ENCODE measurements at regions of chr2 and their contacts with region 1.

Region 1: GRCh38 chr2:65056215-65057053 is at the start of gene CEP68:
- DNase-seq: peak; percentile 93 to 97 (median 95)
- H3K4me3 ChIP-seq: peak within 1 kb of the TSS; percentile 65
- H3K4me3 Mint-ChIP-seq: peak within 1 kb of the TSS; percentile 85 to 98 (median 97)
- H3K27ac ChIP-seq: peak within 1 kb of the TSS; percentile 55
- H3K27ac Mint-ChIP-seq: peak within 1 kb of the TSS; percentile 71 to 96 (median 94)
- H3K4me1 ChIP-seq: peaks cover 61% of the 10 kb centered on the region
- H3K4me1 Mint-ChIP-seq: peaks cover 53 to 76% (median 72%) of the 10 kb centered on the region in 3 donors
- H3K27me3 ChIP-seq: no peaks in the 10 kb centered on the region
- H3K27me3 Mint-ChIP-seq: peaks cover 0 to 1% of the 10 kb centered on the region in 2 donors
- total RNA-seq, gene CEP68: 7.2 to 7.4 TPM

Region 2: DNA sequence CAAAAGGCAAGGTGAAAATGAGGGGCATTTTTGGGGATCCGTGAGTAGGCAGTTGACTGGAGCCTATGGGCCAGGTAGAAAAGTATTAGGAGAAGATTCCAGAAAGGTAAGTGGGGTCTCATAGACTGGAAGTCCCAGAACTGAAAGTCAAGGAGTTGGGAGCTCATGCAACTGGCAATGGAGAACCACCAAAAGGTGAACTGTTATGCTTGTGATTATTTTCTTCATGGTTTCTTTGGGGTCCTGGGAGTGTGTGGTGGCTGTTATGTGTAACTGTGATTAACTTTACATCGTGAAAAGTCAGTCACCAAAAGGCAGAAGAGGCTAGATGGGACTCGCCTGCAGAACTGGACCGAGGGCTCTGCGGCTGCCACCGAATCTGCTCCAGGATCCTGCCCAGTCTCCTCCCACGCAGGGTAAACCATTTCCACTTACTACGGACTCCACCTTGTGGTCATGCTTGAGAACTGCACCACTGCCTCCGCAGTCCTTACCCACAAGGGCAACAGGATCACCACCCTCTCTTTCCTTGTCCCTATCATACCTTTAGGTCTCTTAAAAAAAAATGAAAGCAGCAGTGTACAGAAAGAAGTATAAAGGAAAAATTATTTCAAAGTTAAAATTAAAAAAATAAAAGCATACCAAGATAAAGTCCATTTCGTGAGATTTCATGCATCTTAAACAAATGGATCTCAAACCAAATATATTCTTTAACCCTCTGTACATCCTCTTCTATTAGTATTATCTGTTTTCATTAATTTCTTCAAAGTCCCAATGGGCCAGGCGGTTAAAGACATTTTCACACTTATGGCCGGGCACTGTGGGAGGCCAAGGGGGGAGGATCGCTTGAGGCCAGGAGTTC is 15.8 kb before region 1 on chr2:
- CTCF ChIA-PET with region 1: interaction called, 14 read pairs
- POLR2A ChIA-PET with region 1: interaction called, 3 read pairs
- DNase-seq: peak; percentile 61 to 80 (median 66)
- H3K4me3 ChIP-seq: no peak overlapping the region
- H3K4me3 Mint-ChIP-seq: peak overlapping the region in 4 of 7 donors; percentile 32 to 55 (median 44)
- H3K27ac ChIP-seq: no peak overlapping the region
- H3K27ac Mint-ChIP-seq: peak overlapping the region in 2 of 8 donors; percentile 38 to 39
- H3K4me1 ChIP-seq: peaks cover 4% of the 10 kb centered on the region
- H3K4me1 Mint-ChIP-seq: peaks cover 7 to 12% (median 9%) of the 10 kb centered on the region in 3 donors
- H3K27me3 ChIP-seq: no peaks in the 10 kb centered on the region
- H3K27me3 Mint-ChIP-seq: no peaks in the 10 kb centered on the region

Region 3: DNA sequence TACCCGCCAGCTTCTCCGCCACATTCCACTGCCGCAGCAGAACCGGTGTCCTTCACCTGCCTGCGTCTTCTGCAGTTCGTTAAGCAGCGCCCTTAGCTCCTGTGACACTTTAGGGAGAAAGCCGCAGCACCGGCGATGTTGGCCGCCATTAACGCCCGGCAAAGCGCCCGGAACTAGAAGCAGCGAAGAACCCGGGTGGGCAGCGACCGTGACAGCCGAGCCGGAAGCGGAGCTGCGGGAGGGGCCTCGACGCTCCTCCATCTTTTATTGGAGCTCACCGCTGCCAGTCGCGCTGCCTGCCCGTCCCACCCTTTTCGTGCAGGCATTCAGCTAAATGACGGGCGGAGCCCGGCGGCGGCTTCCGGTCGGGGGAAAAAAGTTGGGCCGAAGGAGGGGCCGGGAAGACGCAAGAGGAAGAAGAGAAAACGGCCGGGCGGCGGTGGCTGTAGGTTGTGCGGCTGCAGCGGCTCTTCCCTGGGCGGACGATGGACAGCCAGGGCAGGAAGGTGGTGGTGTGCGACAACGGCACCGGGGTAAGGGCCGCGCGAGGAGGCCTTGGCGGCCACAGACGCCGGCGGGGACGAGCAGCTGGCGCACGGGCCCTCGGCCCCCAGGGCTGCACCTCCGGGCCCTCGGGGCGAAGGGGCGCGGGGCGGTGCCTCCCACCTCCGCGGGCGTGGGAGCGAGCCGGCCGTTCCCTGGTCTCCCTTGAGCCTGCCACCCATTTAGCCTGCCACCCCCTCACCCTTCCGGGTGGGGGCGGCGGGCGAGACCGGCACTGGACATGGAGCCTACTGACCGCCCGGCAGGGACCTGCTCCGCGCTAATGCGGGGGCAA is 171.2 kb after region 1 on chr2 and contains the start of gene ACTR2:
- CTCF ChIA-PET with region 1: interaction called, 4 read pairs
- POLR2A ChIA-PET with region 1: interaction called, 15 read pairs
- DNase-seq: peak; percentile 90 to 96 (median 93)
- H3K4me3 ChIP-seq: peak within 1 kb of the TSS; percentile 97
- H3K4me3 Mint-ChIP-seq: peak within 1 kb of the TSS; percentile 91 to 99 (median 98)
- H3K27ac ChIP-seq: peak within 1 kb of the TSS; percentile 97
- H3K27ac Mint-ChIP-seq: peak within 1 kb of the TSS; percentile 91 to 99 (median 98)
- H3K4me1 ChIP-seq: peaks cover 40% of the 10 kb centered on the region
- H3K4me1 Mint-ChIP-seq: peaks cover 45 to 50% (median 47%) of the 10 kb centered on the region in 3 donors
- H3K27me3 ChIP-seq: no peaks in the 10 kb centered on the region
- H3K27me3 Mint-ChIP-seq: no peaks in the 10 kb centered on the region
- total RNA-seq, gene ACTR2: 294 to 306 TPM